ENCODE measurements at regions of chr21 and their contacts with region 1.

Region 1: DNA sequence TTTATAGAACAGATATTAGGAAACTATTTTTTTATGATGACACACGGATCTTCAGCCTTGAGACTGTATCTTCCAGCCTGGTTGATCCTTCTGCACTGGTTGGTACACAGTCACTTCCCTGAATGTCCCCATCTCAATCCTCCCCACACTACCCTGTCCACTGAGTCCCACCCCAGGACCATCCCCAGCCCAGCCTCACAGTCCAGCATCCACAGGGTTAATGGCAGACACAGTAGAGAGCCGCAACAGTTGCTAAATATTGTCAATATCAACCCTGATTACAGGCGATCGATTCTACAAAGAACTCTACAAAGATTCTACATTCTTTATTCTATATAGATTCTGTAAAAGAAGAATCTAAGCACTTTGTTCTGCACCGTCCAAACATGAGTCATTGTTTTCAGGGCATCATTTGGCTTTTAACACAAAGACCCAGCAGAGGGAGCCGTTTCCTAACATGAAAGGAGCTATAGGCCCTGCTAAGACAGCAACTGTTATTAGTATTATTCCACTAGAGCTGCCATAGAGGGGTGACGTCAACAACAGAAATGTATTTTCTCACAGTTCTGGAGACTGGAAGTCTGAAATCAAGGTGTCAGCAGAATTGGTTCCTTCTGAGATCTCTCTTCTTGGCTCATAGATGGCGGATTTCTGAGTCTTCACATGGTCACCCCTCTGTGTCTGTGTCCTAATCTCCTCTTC is 30.1 kb upstream of the IFNAR2 start:
- DNase-seq: no peak
- ATAC-seq: peak; percentile 70 to 75
- H3K4me3 ChIP-seq: no peak overlapping the region
- H3K27ac ChIP-seq: peak overlapping the region; percentile 73
- H3K4me1 ChIP-seq: peaks cover 57% of the 10 kb centered on the region
- H3K27me3 ChIP-seq: no peaks in the 10 kb centered on the region
- CTCF ChIP-seq: peak; percentile 85

Region 2: DNA sequence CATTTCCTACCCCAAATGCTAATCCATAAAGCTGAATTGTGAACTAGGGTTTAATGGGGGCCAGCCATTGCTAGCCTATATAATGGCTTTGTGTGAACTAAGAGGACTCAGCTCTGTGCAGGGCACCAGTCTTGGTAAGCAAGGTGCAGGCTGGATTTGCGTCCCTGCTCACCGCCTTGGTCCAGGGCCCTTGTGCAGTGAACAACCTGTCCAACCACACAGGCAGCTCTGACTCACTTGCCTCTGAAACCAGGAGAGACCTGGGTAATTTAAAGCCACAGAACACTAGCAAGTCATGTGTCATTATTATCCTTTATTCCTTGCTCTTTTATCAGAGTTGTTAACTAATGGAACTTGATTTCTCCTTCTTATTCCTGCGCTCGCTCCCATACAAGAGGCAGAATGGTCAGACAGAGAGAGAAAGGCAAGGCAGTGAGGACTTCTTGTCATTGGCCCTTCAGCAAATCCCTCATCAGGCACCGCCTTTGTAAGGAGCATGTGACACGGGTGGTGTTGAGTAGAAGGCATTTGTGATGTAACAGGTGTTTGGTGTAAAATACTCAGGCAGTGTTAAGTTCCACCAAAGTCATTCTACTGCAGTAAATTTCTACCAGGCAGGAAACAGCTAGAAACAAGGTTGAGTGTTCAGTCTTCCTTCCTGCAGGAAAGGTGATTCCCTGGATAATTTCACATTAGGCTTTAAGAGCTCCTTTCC is 241.2 kb before region 1 on chr21:
- intact Hi-C with region 1: no loop called
- DNase-seq: no peak
- ATAC-seq: no peak
- H3K4me3 ChIP-seq: no peak overlapping the region
- H3K27ac ChIP-seq: no peak overlapping the region
- H3K4me1 ChIP-seq: no peaks in the 10 kb centered on the region
- H3K27me3 ChIP-seq: peaks cover 51% of the 10 kb centered on the region
- CTCF ChIP-seq: no peak

Region 3: GRCh38 chr21:33036430-33037162 is 163.1 kb before region 1 on chr21:
- intact Hi-C with region 1: no loop called
- DNase-seq: peak; percentile 60
- ATAC-seq: peak; percentile 58 to 73
- H3K4me3 ChIP-seq: no peak overlapping the region
- H3K27ac ChIP-seq: no peak overlapping the region
- H3K4me1 ChIP-seq: no peaks in the 10 kb centered on the region
- H3K27me3 ChIP-seq: peaks cover 38% of the 10 kb centered on the region
- CTCF ChIP-seq: no peak

Region 4: GRCh38 chr21:33441489-33442477 is 242.1 kb after region 1 on chr21:
- intact Hi-C with region 1: loop called (anchors 10 kb)
- DNase-seq: peak; percentile 68
- ATAC-seq: peak; percentile 75 to 77
- H3K4me3 ChIP-seq: no peak overlapping the region
- H3K27ac ChIP-seq: peak overlapping the region; percentile 82
- H3K4me1 ChIP-seq: peaks cover 19% of the 10 kb centered on the region
- H3K27me3 ChIP-seq: no peaks in the 10 kb centered on the region
- CTCF ChIP-seq: no peak

Region 5: GRCh38 chr21:33608559-33608958 is 408.9 kb after region 1 on chr21:
- intact Hi-C with region 1: no loop called
- DNase-seq: no peak
- ATAC-seq: no peak
- H3K4me3 ChIP-seq: no peak overlapping the region
- H3K27ac ChIP-seq: no peak overlapping the region
- H3K4me1 ChIP-seq: no peaks in the 10 kb centered on the region
- H3K27me3 ChIP-seq: no peaks in the 10 kb centered on the region
- CTCF ChIP-seq: no peak

Measured in lower lobe of right lung (tissue), 2 donors.